Mammary epithelial cell (primary cell): ENCODE measurements at regions of chr9 and their contacts with region 1.

Region 1: GRCh38 chr9:98690686-98691085 is 18.0 kb downstream of the GABBR2 start:
- DNase-seq: no peak
- H3K4me3 ChIP-seq: no peak overlapping the region
- H3K27ac ChIP-seq: no peak overlapping the region
- H3K4me1 ChIP-seq: no peaks in the 10 kb centered on the region
- H3K27me3 ChIP-seq: no peaks in the 10 kb centered on the region
- CTCF ChIP-seq: no peak

Region 2: GRCh38 chr9:98287383-98287782 is 403.3 kb before region 1 on chr9:
- CTCF ChIA-PET with region 1: no interaction called
- dilution Hi-C with region 1: loop called (anchors 5 kb)
- in situ Hi-C with region 1: no loop called
- intact Hi-C with region 1: no loop called
- DNase-seq: no peak
- H3K4me3 ChIP-seq: no peak overlapping the region
- H3K27ac ChIP-seq: no peak overlapping the region
- H3K4me1 ChIP-seq: no peaks in the 10 kb centered on the region
- H3K27me3 ChIP-seq: no peaks in the 10 kb centered on the region
- CTCF ChIP-seq: no peak

Region 3: DNA sequence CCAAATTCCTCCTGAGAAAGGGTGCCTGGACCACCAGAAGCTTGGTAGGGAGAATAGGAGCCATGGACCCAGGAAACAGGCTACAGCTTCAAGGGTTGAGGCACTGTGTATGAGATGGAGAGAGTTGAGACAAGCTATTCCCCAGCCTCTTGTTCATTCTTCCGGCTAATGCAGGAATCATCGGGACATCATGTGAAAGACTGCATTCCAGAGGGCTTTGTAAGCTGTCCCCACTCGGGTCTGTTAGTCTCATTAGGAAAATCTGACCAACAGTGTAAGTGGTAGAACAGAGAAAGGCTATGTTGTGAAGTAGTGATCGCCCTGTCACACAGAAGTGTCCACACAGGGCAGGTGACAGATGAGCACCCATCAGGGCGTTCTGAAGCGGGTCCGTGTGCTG is 63.4 kb before region 1 on chr9:
- CTCF ChIA-PET with region 1: no interaction called
- dilution Hi-C with region 1: loop called (anchors 5 kb)
- in situ Hi-C with region 1: no loop called
- intact Hi-C with region 1: no loop called
- DNase-seq: no peak
- H3K4me3 ChIP-seq: no peak overlapping the region
- H3K27ac ChIP-seq: no peak overlapping the region
- H3K4me1 ChIP-seq: no peaks in the 10 kb centered on the region
- H3K27me3 ChIP-seq: peaks cover 9% of the 10 kb centered on the region
- CTCF ChIP-seq: no peak

Region 4: GRCh38 chr9:98726735-98727134 is 36.0 kb after region 1 on chr9:
- CTCF ChIA-PET with region 1: no interaction called
- dilution Hi-C with region 1: loop called (anchors 5 kb)
- in situ Hi-C with region 1: no loop called
- intact Hi-C with region 1: no loop called
- DNase-seq: no peak
- H3K4me3 ChIP-seq: no peak overlapping the region
- H3K27ac ChIP-seq: no peak overlapping the region
- H3K4me1 ChIP-seq: no peaks in the 10 kb centered on the region
- H3K27me3 ChIP-seq: no peaks in the 10 kb centered on the region
- CTCF ChIP-seq: no peak

Region 5: GRCh38 chr9:98848450-98849149 is 157.9 kb after region 1 on chr9:
- CTCF ChIA-PET with region 1: no interaction called
- dilution Hi-C with region 1: no loop called
- in situ Hi-C with region 1: no loop called
- intact Hi-C with region 1: no loop called
- DNase-seq: peak; percentile 97
- H3K4me3 ChIP-seq: peak overlapping the region in 2 of 3 experiments; percentile 7 to 10
- H3K27ac ChIP-seq: no peak overlapping the region
- H3K4me1 ChIP-seq: peaks cover 17% of the 10 kb centered on the region
- H3K27me3 ChIP-seq: no peaks in the 10 kb centered on the region
- CTCF ChIP-seq: peak; percentile 97